Colonic mucosa (tissue), 4 donors: ENCODE measurements at regions of chr2 and their contacts with region 1.

Region 1: GRCh38 chr2:68282811-68283418 is 30.6 kb upstream of the PPP3R1 start:
- DNase-seq: no peak
- H3K4me3 ChIP-seq: no peak overlapping the region
- H3K27ac ChIP-seq: no peak overlapping the region
- H3K4me1 ChIP-seq: no peaks in the 10 kb centered on the region
- H3K27me3 ChIP-seq: no peaks in the 10 kb centered on the region
- CTCF ChIP-seq: peak; percentile 72

Region 2: DNA sequence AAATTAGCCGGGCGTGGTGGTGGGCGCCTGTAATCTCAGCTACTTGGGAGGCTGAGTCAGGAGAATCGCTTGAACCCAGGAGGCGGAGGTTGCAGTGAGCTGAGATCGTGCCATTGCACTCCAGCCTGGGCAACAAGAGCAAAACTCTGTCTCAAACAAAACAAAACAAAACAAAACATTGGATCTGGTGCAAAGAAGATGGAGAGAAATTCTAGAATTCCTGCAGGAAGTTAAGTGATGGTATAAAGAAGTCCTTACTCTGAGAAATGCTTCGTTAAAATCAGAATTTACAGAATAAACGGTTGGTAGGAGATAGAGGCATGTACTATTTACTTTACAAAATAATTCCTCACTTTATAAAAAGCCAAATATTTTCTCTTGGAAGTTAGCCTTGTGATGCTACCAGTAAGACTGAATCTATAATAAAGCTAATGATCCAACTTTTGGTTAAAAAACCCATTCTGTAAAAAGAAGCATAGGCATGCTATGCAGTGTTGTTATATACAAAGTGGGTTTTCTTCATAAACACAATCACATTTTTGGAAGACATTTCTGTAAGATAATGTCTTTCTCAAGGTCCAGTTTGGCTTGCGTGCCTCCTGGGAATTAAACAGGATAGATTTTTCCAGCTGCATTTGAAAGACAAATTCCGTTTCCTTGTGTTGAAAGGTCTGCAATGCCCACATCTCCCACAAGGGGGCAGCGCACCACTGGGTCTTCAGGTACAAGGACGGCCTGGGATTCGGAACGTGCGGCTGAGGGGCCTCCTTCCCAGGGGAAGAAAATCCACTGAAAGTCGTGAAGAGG is 160.8 kb before region 1 on chr2:
- intact Hi-C with region 1: loop called (anchors 1 kb)
- DNase-seq: peak; percentile 89
- H3K4me3 ChIP-seq: no peak overlapping the region
- H3K27ac ChIP-seq: no peak overlapping the region
- H3K4me1 ChIP-seq: no peaks in the 10 kb centered on the region
- H3K27me3 ChIP-seq: no peaks in the 10 kb centered on the region
- CTCF ChIP-seq: peak; percentile 98

Region 3: GRCh38 chr2:68196120-68196716 is 86.7 kb before region 1 on chr2:
- intact Hi-C with region 1: loop called (anchors 5 kb)
- DNase-seq: peak; percentile 55
- H3K4me3 ChIP-seq: no peak overlapping the region
- H3K27ac ChIP-seq: no peak overlapping the region
- H3K4me1 ChIP-seq: peaks cover 1% of the 10 kb centered on the region
- H3K27me3 ChIP-seq: no peaks in the 10 kb centered on the region
- CTCF ChIP-seq: peak; percentile 69

Region 4: GRCh38 chr2:68423966-68424650 is 141.2 kb after region 1 on chr2:
- intact Hi-C with region 1: no loop called
- DNase-seq: no peak
- H3K4me3 ChIP-seq: no peak overlapping the region
- H3K27ac ChIP-seq: no peak overlapping the region
- H3K4me1 ChIP-seq: no peaks in the 10 kb centered on the region
- H3K27me3 ChIP-seq: no peaks in the 10 kb centered on the region
- CTCF ChIP-seq: no peak